ENCODE measurements at regions of chr12 and their contacts with region 1.

Region 1: GRCh38 chr12:26028953-26029735 is 70.7 kb downstream of the RASSF8 start:
- DNase-seq: peak in 4 of 14 experiments; percentile 10 to 47 (median 26)
- ATAC-seq: no peak
- H3K4me3 ChIP-seq: no peak overlapping the region
- H3K4me3 Mint-ChIP-seq: no peak overlapping the region
- H3K27ac ChIP-seq: no peak overlapping the region
- H3K27ac Mint-ChIP-seq: no peak overlapping the region
- H3K4me1 ChIP-seq: no peaks in the 10 kb centered on the region
- H3K4me1 Mint-ChIP-seq: no peaks in the 10 kb centered on the region
- H3K27me3 ChIP-seq: no peaks in the 10 kb centered on the region
- H3K27me3 Mint-ChIP-seq: no peaks in the 10 kb centered on the region
- CTCF ChIP-seq: peak; percentile 64

Region 2: DNA sequence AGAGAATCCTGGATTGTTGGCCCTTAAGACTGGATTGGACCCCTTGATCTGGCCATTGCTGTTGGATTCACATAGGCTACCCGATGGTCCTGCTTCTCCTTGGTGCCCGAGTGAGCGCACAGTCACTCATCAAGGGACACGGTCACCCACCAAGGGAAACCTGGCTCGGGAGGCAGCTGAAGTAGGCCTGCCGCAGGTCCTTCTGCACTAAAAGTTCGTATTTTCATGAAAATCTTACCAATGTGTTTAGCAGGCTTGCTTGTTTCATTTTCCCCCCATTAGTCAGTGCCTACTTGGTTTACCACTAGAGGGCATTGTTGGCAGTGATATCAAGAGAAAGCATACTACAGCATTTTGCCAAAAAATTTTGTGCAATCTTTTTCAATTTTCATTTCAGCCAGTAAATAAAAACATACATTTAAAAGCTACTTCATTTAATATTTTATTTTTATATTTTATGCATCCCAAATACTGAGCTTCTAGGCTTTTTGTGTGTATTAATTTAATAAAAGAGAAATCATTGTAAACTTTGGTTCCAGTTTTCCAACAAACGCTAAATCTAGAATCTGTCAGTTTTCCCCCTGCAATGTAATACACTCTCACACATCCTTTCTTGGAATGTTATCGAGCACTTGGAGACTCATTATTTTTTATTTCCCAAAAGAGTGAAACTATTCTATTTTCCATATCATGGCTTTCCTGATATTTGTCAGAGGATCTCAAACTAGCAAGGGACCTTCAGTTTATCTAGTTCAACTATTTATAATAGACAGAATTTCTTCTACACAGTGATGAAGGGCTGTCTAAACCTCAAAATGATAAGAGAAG is 592.7 kb before region 1 on chr12:
- CTCF ChIA-PET with region 1: interaction called, 3 read pairs
- POLR2A ChIA-PET with region 1: no interaction called
- intact Hi-C with region 1: loop called (anchors 1 kb)
- DNase-seq: peak in 6 of 14 experiments; percentile 7 to 73 (median 33)
- ATAC-seq: peak; percentile 70
- H3K4me3 ChIP-seq: no peak overlapping the region
- H3K4me3 Mint-ChIP-seq: no peak overlapping the region
- H3K27ac ChIP-seq: no peak overlapping the region
- H3K27ac Mint-ChIP-seq: no peak overlapping the region
- H3K4me1 ChIP-seq: peaks cover 4% of the 10 kb centered on the region
- H3K4me1 Mint-ChIP-seq: peaks cover 8% of the 10 kb centered on the region
- H3K27me3 ChIP-seq: no peaks in the 10 kb centered on the region
- H3K27me3 Mint-ChIP-seq: no peaks in the 10 kb centered on the region
- CTCF ChIP-seq: peak; percentile 91

Region 3: GRCh38 chr12:25583545-25583944 is 445.6 kb before region 1 on chr12:
- CTCF ChIA-PET with region 1: no interaction called
- POLR2A ChIA-PET with region 1: no interaction called
- intact Hi-C with region 1: loop called (anchors 2 to 5 kb)
- DNase-seq: no peak
- ATAC-seq: peak; percentile 59
- H3K4me3 ChIP-seq: no peak overlapping the region
- H3K4me3 Mint-ChIP-seq: no peak overlapping the region
- H3K27ac ChIP-seq: no peak overlapping the region
- H3K27ac Mint-ChIP-seq: no peak overlapping the region
- H3K4me1 ChIP-seq: no peaks in the 10 kb centered on the region
- H3K4me1 Mint-ChIP-seq: peaks cover 14% of the 10 kb centered on the region
- H3K27me3 ChIP-seq: peaks cover 0 to 3% of the 10 kb centered on the region in 2 experiments
- H3K27me3 Mint-ChIP-seq: no peaks in the 10 kb centered on the region
- CTCF ChIP-seq: no peak

Region 4: DNA sequence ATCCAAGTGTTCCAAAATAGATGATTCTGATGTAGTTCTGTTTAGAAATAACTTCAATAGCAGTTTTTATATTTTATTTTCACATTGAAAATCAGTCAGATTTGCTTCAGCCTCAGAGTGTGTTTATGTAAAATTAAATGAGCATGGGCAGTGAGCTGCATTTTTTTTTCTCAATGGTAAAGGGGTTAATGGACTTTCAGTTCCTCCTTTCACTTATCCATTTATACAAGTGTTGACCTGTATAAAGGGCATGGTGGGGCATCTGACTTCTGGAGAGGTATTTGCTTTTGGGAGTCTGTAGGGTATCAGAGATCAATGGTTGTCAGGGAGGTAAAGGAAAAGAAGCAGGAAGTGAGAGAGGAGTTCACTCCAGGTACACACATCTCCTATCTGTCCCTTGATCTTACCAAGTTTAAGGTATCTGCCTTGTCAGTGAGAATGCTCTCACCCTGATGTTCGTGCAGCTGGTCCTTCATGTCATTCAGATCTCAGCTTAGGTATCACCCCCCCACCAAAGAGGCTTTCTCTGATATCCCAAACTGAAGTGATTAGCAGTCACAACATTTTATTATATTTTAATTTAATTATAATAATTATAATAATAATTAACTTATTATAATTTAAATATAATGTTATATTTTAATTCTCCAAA is 294.5 kb before region 1 on chr12:
- CTCF ChIA-PET with region 1: no interaction called
- POLR2A ChIA-PET with region 1: no interaction called
- intact Hi-C with region 1: no loop called
- DNase-seq: no peak
- ATAC-seq: no peak
- H3K4me3 ChIP-seq: no peak overlapping the region
- H3K4me3 Mint-ChIP-seq: no peak overlapping the region
- H3K27ac ChIP-seq: no peak overlapping the region
- H3K27ac Mint-ChIP-seq: no peak overlapping the region
- H3K4me1 ChIP-seq: no peaks in the 10 kb centered on the region
- H3K4me1 Mint-ChIP-seq: no peaks in the 10 kb centered on the region
- H3K27me3 ChIP-seq: no peaks in the 10 kb centered on the region
- H3K27me3 Mint-ChIP-seq: no peaks in the 10 kb centered on the region
- CTCF ChIP-seq: no peak

Measured in CD4-positive, alpha-beta T cell (primary cell).